Colonic mucosa (tissue), 4 donors: ENCODE measurements at regions of chr14 and their contacts with region 1.

Region 1: DNA sequence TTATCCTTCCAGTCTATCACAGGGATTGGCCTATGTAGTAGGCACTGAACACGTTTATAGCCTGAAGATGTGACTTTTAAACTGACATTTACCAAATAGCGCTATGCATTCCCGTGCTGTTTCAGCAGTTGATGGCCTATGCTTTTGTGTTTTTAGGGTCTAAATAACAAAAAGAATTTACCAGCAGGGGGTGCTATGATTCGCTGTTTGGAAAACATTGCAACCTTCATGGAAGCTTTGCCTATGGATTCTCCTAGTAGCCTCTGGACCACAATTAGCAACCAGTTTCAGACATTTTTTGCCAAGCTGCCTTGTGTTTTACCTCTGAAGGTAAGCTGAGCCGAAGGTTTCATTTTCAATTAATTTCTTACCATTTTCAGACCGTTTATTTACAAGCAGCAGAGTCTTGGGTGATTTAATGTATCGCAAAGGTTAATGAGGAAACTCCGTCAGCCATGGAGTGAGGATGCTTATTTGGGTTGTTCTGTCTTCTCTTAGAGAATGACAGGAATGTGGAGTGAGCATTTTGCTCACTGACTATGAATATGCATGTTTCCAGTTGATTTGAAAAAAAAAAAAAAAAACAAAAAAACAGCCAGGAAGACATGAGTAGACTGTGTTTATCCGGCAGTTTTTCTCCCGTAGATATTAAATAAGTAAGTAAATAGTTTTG is 133.1 kb downstream of the PRIMA1 start:
- DNase-seq: peak; percentile 29
- H3K4me3 ChIP-seq: no peak overlapping the region
- H3K27ac ChIP-seq: no peak overlapping the region
- H3K4me1 ChIP-seq: no peaks in the 10 kb centered on the region
- H3K27me3 ChIP-seq: no peaks in the 10 kb centered on the region
- CTCF ChIP-seq: peak; percentile 36

Region 2: DNA sequence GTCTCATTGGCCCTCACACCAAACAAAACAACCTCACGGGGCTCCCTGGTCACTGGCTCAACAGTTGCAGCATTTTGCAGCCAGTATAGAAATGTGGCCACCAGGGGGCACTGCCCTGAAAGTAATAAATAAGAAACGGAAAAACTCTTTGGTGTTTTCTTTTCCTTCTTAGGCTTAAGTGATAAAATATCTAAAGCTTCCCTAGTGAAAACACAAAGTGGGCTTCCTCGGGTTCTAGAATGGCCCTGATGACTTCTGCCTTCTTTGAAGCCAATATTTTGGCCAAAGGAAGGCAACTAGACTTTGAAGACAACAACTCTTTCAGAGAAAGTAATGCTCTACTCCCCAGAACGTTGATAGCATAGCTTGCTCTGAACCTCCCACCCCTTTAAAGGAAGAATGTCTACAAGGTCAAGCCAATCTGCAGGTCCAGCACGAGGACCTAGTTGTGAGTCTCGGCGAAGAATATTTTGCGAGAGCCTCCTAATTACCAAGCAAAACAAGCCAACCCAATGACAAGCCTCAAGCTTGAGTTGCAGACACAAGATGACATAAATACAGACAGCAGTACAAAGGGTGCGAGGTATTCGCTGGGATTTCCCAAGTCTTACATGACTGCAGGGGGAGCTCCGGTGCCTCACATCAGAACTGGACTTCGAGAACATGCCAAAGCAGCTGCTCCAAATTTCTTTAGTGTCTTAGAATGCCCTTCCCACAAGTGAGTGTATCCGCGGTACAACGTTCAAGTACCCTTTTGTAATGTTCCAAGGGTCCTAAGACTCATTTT is 542.1 kb before region 1 on chr14:
- intact Hi-C with region 1: no loop called
- DNase-seq: peak; percentile 91
- H3K4me3 ChIP-seq: peak overlapping the region; percentile 93
- H3K27ac ChIP-seq: peak overlapping the region; percentile 70
- H3K4me1 ChIP-seq: peaks cover 12% of the 10 kb centered on the region
- H3K27me3 ChIP-seq: no peaks in the 10 kb centered on the region
- CTCF ChIP-seq: peak; percentile 84

Region 3: GRCh38 chr14:93780813-93781400 is 125.7 kb after region 1 on chr14:
- intact Hi-C with region 1: loop called (anchors 5 kb)
- DNase-seq: no peak
- H3K4me3 ChIP-seq: no peak overlapping the region
- H3K27ac ChIP-seq: no peak overlapping the region
- H3K4me1 ChIP-seq: no peaks in the 10 kb centered on the region
- H3K27me3 ChIP-seq: no peaks in the 10 kb centered on the region
- CTCF ChIP-seq: no peak

Region 4: GRCh38 chr14:93792391-93792790 is 137.2 kb after region 1 on chr14:
- intact Hi-C with region 1: no loop called
- DNase-seq: no peak
- H3K4me3 ChIP-seq: no peak overlapping the region
- H3K27ac ChIP-seq: no peak overlapping the region
- H3K4me1 ChIP-seq: no peaks in the 10 kb centered on the region
- H3K27me3 ChIP-seq: peaks cover 16% of the 10 kb centered on the region
- CTCF ChIP-seq: no peak

Region 5: GRCh38 chr14:93892923-93893558 is 237.8 kb after region 1 on chr14:
- intact Hi-C with region 1: loop called (anchors 5 kb)
- DNase-seq: peak; percentile 66
- H3K4me3 ChIP-seq: no peak overlapping the region
- H3K27ac ChIP-seq: no peak overlapping the region
- H3K4me1 ChIP-seq: no peaks in the 10 kb centered on the region
- H3K27me3 ChIP-seq: no peaks in the 10 kb centered on the region
- CTCF ChIP-seq: peak; percentile 98